Ovary (tissue), 10 donors: ENCODE measurements at regions of chr4 and their contacts with region 1.

Region 1: GRCh38 chr4:107906458-107907100 is 24.8 kb upstream of the CYP2U1 start:
- DNase-seq: no peak
- H3K4me3 ChIP-seq: no peak overlapping the region
- H3K27ac ChIP-seq: no peak overlapping the region
- H3K4me1 ChIP-seq: no peaks in the 10 kb centered on the region
- H3K27me3 ChIP-seq: no peaks in the 10 kb centered on the region
- CTCF ChIP-seq: no peak
- EP300 ChIP-seq: no peak
- POLR2A ChIP-seq: no peak

Region 2: GRCh38 chr4:107299646-107300045 is 606.9 kb before region 1 on chr4:
- intact Hi-C with region 1: no loop called
- DNase-seq: no peak
- H3K4me3 ChIP-seq: no peak overlapping the region
- H3K27ac ChIP-seq: no peak overlapping the region
- H3K4me1 ChIP-seq: no peaks in the 10 kb centered on the region
- H3K27me3 ChIP-seq: no peaks in the 10 kb centered on the region
- CTCF ChIP-seq: no peak
- EP300 ChIP-seq: no peak
- POLR2A ChIP-seq: no peak

Region 3: GRCh38 chr4:107619066-107619465 is 287.5 kb before region 1 on chr4:
- intact Hi-C with region 1: no loop called
- DNase-seq: no peak
- H3K4me3 ChIP-seq: no peak overlapping the region
- H3K27ac ChIP-seq: no peak overlapping the region
- H3K4me1 ChIP-seq: no peaks in the 10 kb centered on the region
- H3K27me3 ChIP-seq: no peaks in the 10 kb centered on the region
- CTCF ChIP-seq: no peak
- EP300 ChIP-seq: no peak
- POLR2A ChIP-seq: no peak

Region 4: DNA sequence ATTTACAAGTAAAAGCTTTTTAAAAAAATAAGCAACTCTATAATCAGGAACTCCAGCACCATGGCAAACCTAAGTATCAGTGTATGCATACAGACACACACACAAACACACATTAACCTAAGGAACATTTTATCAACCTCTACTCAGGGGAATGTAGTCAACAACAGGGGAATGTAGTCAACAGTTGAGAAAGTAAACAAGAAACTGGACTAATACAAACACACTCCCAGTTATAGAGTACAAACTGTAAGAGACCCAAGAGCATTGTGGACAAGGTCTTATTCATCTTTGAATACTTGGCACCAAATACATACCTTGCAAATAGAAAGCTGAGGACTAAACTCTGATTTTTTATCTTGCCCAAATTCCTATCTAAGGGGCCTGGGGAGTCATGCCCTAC is 222.7 kb before region 1 on chr4:
- intact Hi-C with region 1: no loop called
- DNase-seq: no peak
- H3K4me3 ChIP-seq: no peak overlapping the region
- H3K27ac ChIP-seq: no peak overlapping the region
- H3K4me1 ChIP-seq: no peaks in the 10 kb centered on the region
- H3K27me3 ChIP-seq: no peaks in the 10 kb centered on the region
- CTCF ChIP-seq: no peak
- EP300 ChIP-seq: no peak
- POLR2A ChIP-seq: no peak

Region 5: DNA sequence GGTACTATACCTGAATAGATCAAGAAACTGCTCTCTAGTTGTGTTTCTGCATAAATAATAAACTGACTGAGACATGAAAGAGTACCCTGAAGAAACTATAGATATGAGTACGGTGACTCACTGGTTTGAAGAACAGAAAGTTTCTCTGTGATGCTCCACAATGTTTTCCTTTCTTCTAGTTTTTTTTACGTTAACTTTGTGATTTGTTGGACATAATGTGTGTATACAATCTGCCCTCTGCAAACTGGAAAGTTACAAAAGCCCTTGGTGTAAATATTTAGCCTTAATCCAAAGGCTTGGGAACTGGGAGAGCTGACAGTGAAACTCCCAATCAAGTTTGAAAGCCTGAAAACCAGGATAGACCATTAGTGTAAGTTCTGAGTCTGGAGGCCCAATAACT is 154.9 kb before region 1 on chr4:
- intact Hi-C with region 1: loop called in 3 of 4 experiments (anchors 5 kb)
- DNase-seq: no peak
- H3K4me3 ChIP-seq: no peak overlapping the region
- H3K27ac ChIP-seq: no peak overlapping the region
- H3K4me1 ChIP-seq: no peaks in the 10 kb centered on the region
- H3K27me3 ChIP-seq: no peaks in the 10 kb centered on the region
- CTCF ChIP-seq: no peak
- EP300 ChIP-seq: no peak
- POLR2A ChIP-seq: no peak

Region 6: GRCh38 chr4:107757864-107758476 is 148.6 kb before region 1 on chr4:
- intact Hi-C with region 1: loop called (anchors 5 kb)
- DNase-seq: no peak
- H3K4me3 ChIP-seq: no peak overlapping the region
- H3K27ac ChIP-seq: no peak overlapping the region
- H3K4me1 ChIP-seq: no peaks in the 10 kb centered on the region
- H3K27me3 ChIP-seq: no peaks in the 10 kb centered on the region
- CTCF ChIP-seq: peak in 2 of 3 donors; percentile 22 to 28
- EP300 ChIP-seq: no peak
- POLR2A ChIP-seq: no peak

Region 7: DNA sequence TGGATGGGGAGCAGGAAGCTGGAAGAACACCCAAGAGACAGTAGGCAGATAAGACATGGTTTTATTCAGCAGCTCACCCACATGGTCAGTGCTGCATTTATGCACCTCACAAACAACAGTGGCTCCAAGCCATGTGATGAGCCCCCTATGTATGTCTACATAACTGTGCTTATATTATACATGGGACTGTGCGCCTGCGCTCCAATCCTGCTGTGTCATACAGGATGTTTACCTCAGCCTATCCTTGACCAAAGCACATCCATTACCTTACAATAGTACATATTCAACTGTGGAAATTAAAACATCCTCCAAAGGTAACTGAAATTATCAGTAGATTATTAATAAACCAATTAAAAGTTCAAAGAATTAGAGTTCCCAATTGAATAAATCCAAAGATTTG is 125.9 kb before region 1 on chr4:
- intact Hi-C with region 1: no loop called
- DNase-seq: no peak
- H3K4me3 ChIP-seq: no peak overlapping the region
- H3K27ac ChIP-seq: no peak overlapping the region
- H3K4me1 ChIP-seq: no peaks in the 10 kb centered on the region
- H3K27me3 ChIP-seq: no peaks in the 10 kb centered on the region
- CTCF ChIP-seq: no peak
- EP300 ChIP-seq: no peak
- POLR2A ChIP-seq: no peak